ENCODE measurements at regions of chr2 and their contacts with region 1.

Region 1: GRCh38 chr2:200864176-200864976 is at the start of gene CLK1:
- DNase-seq: peak; percentile 95
- ATAC-seq: peak; percentile 79
- H3K4me3 Mint-ChIP-seq: peak within 1 kb of the TSS; percentile 96
- H3K27ac Mint-ChIP-seq: peak within 1 kb of the TSS; percentile 98
- H3K4me1 Mint-ChIP-seq: peaks cover 27% of the 10 kb centered on the region
- H3K27me3 Mint-ChIP-seq: no peaks in the 10 kb centered on the region
- total RNA-seq, gene CLK1: 204 to 228 TPM

Region 2: GRCh38 chr2:200713003-200713703 is 151.2 kb before region 1 on chr2:
- POLR2A ChIA-PET with region 1: interaction called, 32 read pairs
- DNase-seq: peak; percentile 84
- ATAC-seq: peak; percentile 99
- H3K4me3 Mint-ChIP-seq: peak overlapping the region; percentile 82
- H3K27ac Mint-ChIP-seq: peak overlapping the region; percentile 99
- H3K4me1 Mint-ChIP-seq: peaks cover 18% of the 10 kb centered on the region
- H3K27me3 Mint-ChIP-seq: peaks cover 1% of the 10 kb centered on the region

Region 3: DNA sequence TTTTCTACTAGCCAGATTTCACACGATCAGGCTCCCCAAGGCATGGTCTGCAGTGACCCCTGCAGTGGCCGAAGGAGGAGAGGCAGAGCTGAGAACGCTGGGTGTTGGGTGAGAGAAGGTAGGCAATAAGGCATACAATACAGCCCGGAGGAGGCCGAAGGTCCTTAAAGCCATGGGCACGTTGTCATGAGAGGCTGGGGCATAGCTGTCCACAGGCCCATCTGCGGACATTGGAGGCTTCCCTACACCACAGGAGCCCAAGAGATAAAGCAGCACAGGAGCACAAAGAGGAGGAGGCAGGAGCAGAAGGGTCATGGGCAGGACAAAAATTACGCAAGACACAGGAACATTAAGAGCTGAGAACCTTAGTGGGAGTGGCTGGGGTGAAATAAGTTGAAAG is 69.3 kb before region 1 on chr2:
- POLR2A ChIA-PET with region 1: no interaction called
- DNase-seq: no peak
- ATAC-seq: no peak
- H3K4me3 Mint-ChIP-seq: no peak overlapping the region
- H3K27ac Mint-ChIP-seq: no peak overlapping the region
- H3K4me1 Mint-ChIP-seq: no peaks in the 10 kb centered on the region
- H3K27me3 Mint-ChIP-seq: peaks cover 6% of the 10 kb centered on the region

Region 4: GRCh38 chr2:200850512-200851256 is 13.7 kb before region 1 on chr2:
- POLR2A ChIA-PET with region 1: interaction called, 17 read pairs
- DNase-seq: no peak
- ATAC-seq: no peak
- H3K4me3 Mint-ChIP-seq: no peak overlapping the region
- H3K27ac Mint-ChIP-seq: no peak overlapping the region
- H3K4me1 Mint-ChIP-seq: no peaks in the 10 kb centered on the region
- H3K27me3 Mint-ChIP-seq: no peaks in the 10 kb centered on the region

Region 5: DNA sequence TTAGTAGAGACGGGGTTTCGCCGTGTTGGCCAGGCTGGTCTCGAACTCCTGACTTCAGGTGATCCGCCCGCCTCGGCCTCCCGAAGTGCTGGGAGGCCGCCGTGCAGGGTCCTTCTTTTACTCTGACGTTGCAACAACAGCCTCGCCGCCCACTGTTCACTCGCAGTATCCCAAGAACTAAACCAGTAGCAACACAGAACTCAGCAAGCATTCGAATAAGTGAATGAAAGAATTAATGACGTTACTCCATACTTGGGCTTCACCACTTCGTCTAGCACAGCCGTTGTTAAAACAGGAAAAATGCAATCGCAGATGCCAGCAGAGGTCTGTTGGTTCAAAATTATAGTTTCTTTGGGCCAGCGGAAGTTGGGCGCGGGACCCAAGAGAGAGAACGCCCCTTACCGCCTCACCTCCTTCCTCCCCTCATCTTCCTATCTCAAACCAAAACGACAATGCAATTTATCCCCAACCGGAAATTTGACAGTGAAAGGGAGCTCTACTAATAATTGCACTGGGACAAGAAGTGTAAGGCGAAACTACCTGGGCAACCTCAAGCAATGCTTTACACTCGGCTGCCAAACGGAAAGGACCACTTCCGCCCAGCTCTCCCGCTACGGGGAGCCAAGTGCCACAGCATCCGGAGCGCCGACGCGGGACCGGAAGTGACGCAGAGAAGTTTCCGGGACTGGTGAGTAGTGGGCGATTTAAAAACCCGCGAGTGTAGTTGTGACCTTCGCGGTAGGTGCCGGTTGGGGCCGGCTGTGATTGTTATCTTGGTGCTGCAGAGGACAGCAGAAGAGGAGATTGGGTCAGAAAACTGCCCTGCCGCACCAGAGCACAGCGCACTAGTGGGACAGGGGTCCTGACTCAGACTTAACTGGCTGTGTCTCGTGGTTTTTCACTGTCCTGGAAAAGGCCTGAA is 24.6 kb after region 1 on chr2 and contains the starts of genes NIF3L1 and PPIL3:
- POLR2A ChIA-PET with region 1: interaction called, 108 read pairs
- DNase-seq: peak; percentile 94
- ATAC-seq: peak; percentile 79
- H3K4me3 Mint-ChIP-seq: peak within 1 kb of the TSS; percentile 96
- H3K27ac Mint-ChIP-seq: peak within 1 kb of the TSS; percentile 99
- H3K4me1 Mint-ChIP-seq: peaks cover 35% of the 10 kb centered on the region
- H3K27me3 Mint-ChIP-seq: no peaks in the 10 kb centered on the region
- total RNA-seq, gene NIF3L1: 36.9 to 37.7 TPM
- total RNA-seq, gene PPIL3: 44.2 to 45.2 TPM

Region 6: GRCh38 chr2:201118121-201118960 is 254.0 kb after region 1 on chr2:
- POLR2A ChIA-PET with region 1: interaction called, 28 read pairs
- DNase-seq: peak; percentile 82
- ATAC-seq: peak; percentile 28
- H3K4me3 Mint-ChIP-seq: peak overlapping the region; percentile 89
- H3K27ac Mint-ChIP-seq: peak overlapping the region; percentile 99
- H3K4me1 Mint-ChIP-seq: peaks cover 45% of the 10 kb centered on the region
- H3K27me3 Mint-ChIP-seq: no peaks in the 10 kb centered on the region

Measured in activated naive CD8-positive, alpha-beta T cell treated with anti-CD3 and anti-CD28 coated beads, Interleukin-2, amount 10 ng/mL, durations not matched to agents 7 days and 5 days (primary cell).